CD14-positive monocyte (primary cell): ENCODE measurements at regions of chr4 and their contacts with region 1.

Region 1: GRCh38 chr4:82373816-82374625 is at the start of gene HNRNPD:
- DNase-seq: peak; percentile 94 to 98 (median 98)
- H3K4me3 ChIP-seq: peak within 1 kb of the TSS; percentile 70 to 100 (median 98)
- H3K4me3 Mint-ChIP-seq: peak within 1 kb of the TSS; percentile 97 to 98
- H3K27ac ChIP-seq: peak within 1 kb of the TSS; percentile 96 to 100
- H3K27ac Mint-ChIP-seq: peak within 1 kb of the TSS; percentile 97 to 100 (median 99)
- H3K4me1 ChIP-seq: peaks cover 37 to 54% of the 10 kb centered on the region in 2 donors
- H3K4me1 Mint-ChIP-seq: peaks cover 50% of the 10 kb centered on the region
- H3K27me3 ChIP-seq: no peaks in the 10 kb centered on the region
- H3K27me3 Mint-ChIP-seq: no peaks in the 10 kb centered on the region
- CTCF ChIP-seq: no peak
- polyA plus RNA-seq, gene HNRNPD: 97.6 to 174 (median 149) TPM

Region 2: GRCh38 chr4:82428969-82429727 is 55.1 kb after region 1 on chr4:
- intact Hi-C with region 1: loop called (anchors 2 kb)
- DNase-seq: peak; percentile 90 to 94 (median 92)
- H3K4me3 ChIP-seq: peak overlapping the region; percentile 57 to 98 (median 80)
- H3K4me3 Mint-ChIP-seq: peak overlapping the region; percentile 99
- H3K27ac ChIP-seq: peak overlapping the region; percentile 90 to 99
- H3K27ac Mint-ChIP-seq: peak overlapping the region; percentile 96 to 99 (median 98)
- H3K4me1 ChIP-seq: peaks cover 19 to 39% of the 10 kb centered on the region in 2 donors
- H3K4me1 Mint-ChIP-seq: peaks cover 44% of the 10 kb centered on the region
- H3K27me3 ChIP-seq: no peaks in the 10 kb centered on the region
- H3K27me3 Mint-ChIP-seq: no peaks in the 10 kb centered on the region
- CTCF ChIP-seq: peak; percentile 98

Region 3: GRCh38 chr4:82890901-82891706 is 517.1 kb after region 1 on chr4 and contains the start of gene SEC31A:
- intact Hi-C with region 1: loop called in 1 of 2 experiments (anchors 10 kb)
- DNase-seq: peak; percentile 94 to 96 (median 94)
- H3K4me3 ChIP-seq: peak within 1 kb of the TSS; percentile 88 to 99 (median 95)
- H3K4me3 Mint-ChIP-seq: peak within 1 kb of the TSS; percentile 89 to 95
- H3K27ac ChIP-seq: peak within 1 kb of the TSS; percentile 95 to 100
- H3K27ac Mint-ChIP-seq: peak within 1 kb of the TSS; percentile 94 to 98 (median 97)
- H3K4me1 ChIP-seq: peaks cover 17 to 26% of the 10 kb centered on the region in 2 donors
- H3K4me1 Mint-ChIP-seq: peaks cover 29% of the 10 kb centered on the region
- H3K27me3 ChIP-seq: no peaks in the 10 kb centered on the region
- H3K27me3 Mint-ChIP-seq: no peaks in the 10 kb centered on the region
- CTCF ChIP-seq: no peak
- polyA plus RNA-seq, gene SEC31A: 74.8 to 120 (median 107) TPM